ENCODE measurements at regions of chr7 and their contacts with region 1.

Region 1: DNA sequence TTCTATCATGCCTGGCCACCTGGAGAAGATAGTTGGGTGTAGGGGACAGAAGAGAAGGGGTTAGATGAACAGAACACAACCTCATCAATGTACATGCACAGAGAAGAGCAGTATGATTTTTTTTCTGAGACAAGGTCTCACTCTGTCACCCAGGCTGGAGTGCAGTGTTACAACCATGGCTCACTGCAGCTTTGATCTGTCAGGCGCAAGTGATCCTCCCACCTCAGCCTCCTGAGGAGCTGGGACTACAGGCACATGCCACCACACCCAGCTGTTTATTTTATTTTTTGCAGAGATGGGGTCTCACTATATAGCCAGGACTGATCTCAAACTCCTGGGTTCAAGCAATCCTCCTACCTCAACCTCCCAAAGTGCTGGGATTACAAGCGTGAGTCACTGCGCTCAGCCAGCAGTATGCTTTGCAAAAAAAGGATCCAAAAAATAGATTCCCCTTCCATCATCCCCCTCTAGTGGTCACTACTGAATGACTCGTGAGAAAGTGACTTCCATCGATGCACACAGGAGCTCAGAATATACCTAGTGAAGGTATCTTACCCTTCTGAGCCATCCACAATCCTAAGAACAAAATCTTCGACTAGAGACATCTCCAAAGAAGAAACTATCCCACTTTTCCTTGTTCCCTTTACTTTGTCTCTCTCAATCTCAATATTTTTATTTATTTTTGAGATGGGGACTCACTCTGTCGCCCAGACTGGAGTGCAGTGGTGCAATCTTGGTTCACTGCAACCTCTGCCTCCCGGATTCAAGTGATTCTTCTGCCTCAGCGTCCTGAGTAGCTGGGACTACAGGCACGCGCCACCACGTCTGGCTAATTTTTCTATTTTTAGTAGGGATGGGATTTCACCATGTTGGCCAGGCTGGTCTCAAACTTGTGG is 21.0 kb downstream of the ZCWPW1 start:
- DNase-seq: peak; percentile 31
- H3K4me3 ChIP-seq: no peak overlapping the region
- H3K27me3 ChIP-seq: peaks cover 3% of the 10 kb centered on the region; the same call in 1 of the 2 replicates
- CTCF ChIP-seq: peak; percentile 77

Region 2: DNA sequence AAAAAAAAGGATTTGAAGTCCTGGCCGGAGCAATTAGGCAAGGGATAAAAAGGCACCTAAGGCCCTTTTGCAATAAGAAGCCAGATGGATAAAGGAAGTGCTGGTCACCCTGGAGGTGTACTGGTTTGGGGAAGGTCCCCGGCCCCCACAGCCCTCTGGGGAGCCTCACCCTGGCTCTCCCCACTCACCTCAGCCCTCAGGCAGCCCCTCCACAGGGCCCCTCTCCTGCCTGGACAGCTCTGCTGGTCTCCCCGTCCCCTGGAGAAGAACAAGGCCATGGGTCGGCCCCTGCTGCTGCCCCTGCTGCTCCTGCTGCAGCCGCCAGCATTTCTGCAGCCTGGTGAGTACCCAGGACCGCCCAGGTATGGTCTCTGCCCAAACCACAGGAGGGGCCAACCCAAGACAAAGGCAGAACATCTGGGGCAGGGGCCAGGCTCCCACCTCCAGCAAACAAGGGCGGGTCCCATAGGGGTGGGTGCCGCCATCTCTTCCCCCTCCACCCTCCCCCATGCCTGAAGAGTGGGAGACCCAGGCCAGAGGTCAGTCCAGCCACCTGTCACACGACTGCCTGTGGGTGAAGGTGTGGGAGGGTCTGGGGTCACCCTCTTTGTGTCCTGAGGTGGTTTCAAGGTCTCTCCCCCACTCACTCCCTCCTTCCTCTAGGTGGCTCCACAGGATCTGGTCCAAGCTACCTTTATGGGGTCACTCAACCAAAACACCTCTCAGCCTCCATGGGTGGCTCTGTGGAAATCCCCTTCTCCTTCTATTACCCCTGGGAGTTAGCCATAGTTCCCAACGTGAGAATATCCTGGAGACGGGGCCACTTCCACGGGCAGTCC is 49.3 kb before region 1 on chr7 and contains the start of gene PILRB:
- CTCF ChIA-PET with region 1: no interaction called
- POLR2A ChIA-PET with region 1: no interaction called
- DNase-seq: no peak
- H3K4me3 ChIP-seq: no peak within 1 kb of the TSS
- H3K27me3 ChIP-seq: no peaks in the 10 kb centered on the region
- CTCF ChIP-seq: no peak
- polyA plus RNA-seq, gene PILRB: 10.6 and 25.4 TPM in 2 replicates

Region 3: DNA sequence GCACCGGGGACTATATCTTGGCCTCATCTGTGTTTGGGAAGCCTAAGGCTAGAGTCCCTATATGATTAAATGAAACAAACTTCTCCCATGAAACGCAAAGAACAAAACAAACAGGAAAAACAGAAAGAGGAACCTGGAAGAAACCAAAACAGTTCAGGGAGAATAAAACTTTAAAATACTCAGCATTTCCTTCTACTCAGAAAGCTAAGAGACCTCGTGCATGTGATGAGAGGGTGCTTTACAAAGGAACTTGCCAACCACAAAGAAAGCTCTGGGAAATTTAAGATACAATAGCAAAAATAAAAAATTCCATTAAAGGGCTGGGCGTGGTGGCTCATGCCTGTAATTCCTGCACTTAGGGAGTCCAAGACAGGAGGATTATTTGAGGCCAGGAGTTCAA is 27.3 kb before region 1 on chr7:
- CTCF ChIA-PET with region 1: interaction called, 13 read pairs
- POLR2A ChIA-PET with region 1: no interaction called
- DNase-seq: no peak
- H3K4me3 ChIP-seq: no peak overlapping the region
- H3K27me3 ChIP-seq: peaks cover 3% of the 10 kb centered on the region; the same call in 1 of the 2 replicates
- CTCF ChIP-seq: no peak

Region 4: DNA sequence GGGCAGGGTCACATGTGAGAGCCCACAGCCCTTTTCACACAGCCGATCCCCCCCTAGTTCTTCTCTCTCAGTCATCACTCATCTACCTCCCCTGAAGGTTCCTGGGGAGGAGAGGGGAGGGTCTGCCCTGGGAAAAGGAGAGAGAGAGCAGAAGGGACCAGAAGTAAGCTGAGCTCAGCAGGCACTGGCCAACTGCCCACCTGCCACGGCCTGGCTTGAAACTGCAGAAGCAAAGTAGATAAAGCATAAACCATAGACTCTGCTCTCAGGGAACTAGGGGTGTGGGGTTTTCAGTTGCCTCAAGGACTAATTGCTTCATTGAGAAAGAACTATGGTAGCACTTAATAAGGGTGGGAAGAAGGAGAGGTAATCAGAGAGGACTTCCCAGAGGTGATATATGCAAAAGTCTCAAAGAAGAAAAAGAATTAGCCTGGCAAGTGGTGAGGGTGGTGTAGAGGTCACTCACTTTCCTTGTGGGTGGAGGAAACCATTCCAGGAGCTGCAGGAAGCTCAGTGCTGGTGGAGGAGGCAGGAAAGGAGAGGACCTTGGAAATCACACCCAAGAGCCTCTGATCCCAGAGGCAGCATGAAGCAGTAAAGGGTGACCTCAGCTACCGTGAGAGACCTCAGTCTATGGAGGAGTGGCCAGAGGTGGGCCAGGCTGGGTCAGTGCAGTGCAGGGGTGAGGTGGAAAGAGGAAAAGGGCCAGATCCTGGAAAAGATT is 17.1 kb before region 1 on chr7:
- CTCF ChIA-PET with region 1: interaction called, 21 read pairs
- POLR2A ChIA-PET with region 1: no interaction called
- DNase-seq: no peak
- H3K4me3 ChIP-seq: no peak overlapping the region
- H3K27me3 ChIP-seq: peaks cover 18% of the 10 kb centered on the region
- CTCF ChIP-seq: no peak

Region 5: DNA sequence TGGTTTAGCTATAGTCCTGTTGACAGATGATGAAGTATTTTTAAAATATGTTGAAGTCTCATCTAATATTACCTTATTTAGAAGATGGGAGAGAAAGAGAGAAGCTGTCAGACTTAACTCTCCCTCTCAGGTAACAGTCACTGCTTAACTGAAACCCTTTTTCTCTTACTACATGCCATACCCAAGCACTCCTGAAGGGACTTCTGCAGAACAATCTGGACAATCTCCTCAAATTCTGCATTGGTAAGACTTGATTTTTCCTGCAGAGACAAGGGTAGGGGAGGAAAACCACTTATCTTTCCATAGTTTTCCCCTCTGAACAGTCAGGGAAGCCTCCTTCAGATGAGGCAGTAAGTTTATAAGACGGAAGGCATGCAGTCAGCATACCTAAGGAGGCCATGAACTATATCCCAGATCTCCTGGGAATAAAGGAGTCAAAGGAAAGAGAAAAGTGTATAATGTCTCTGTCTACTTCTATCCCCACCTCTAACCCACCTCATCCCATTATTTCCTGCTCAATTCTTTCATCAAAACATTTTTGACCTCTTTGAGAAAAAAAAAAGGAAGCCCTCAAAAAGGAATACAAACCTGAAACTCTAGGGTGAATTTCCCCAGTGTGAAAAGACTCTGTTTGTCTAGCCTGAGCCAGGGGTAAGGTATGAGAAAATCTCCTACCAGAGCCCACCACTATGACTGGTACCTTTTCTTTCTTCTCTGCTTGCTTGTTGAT is 11.6 kb after region 1 on chr7:
- CTCF ChIA-PET with region 1: interaction called, 21 read pairs
- POLR2A ChIA-PET with region 1: no interaction called
- DNase-seq: no peak
- H3K4me3 ChIP-seq: no peak overlapping the region
- H3K27me3 ChIP-seq: no peaks in the 10 kb centered on the region
- CTCF ChIP-seq: no peak